ENCODE measurements at regions of chr13 and their contacts with region 1.

Region 1: DNA sequence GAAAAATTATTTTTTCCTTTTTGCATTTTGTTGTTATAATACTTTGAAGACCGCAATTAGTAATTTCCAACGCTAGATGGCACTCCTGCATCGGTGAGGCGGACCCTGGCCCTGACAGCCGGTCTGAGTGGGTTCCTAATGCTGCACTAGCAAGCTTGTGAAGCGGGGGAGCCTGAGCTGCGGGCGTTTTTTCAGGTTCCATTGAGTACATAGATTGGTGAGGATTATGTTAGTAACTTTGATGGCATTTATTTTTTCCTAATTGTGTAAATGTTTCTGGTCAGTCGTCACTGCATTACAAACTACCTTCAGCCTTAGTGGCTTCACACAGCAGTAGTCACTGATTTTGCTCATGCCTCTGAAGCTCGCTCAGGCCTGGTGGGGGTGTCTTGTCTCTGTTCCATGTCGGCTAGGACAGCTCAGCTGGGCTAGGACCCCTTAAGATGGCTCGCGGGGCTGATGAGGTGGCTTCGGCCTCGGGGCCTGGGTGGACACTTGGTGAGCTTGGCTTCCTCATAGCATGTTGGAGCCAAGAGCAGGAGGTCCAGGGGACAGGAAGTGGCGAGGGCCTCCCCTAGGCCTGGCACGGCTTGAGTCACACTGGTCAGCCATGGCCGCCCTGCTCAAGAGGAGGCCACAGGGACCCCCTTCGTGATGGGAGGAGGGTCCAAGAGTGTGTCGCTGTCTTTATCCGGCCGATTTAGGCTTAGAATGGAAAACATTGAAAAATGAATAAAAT is 25.0 kb downstream of the ERCC5 start:
- DNase-seq: peak; percentile 67
- ATAC-seq: peak; percentile 76
- H3K4me3 Mint-ChIP-seq: no peak overlapping the region
- H3K27ac Mint-ChIP-seq: no peak overlapping the region
- H3K4me1 Mint-ChIP-seq: peaks cover 35% of the 10 kb centered on the region
- H3K27me3 Mint-ChIP-seq: no peaks in the 10 kb centered on the region
- CTCF ChIP-seq: peak; percentile 91

Region 2: DNA sequence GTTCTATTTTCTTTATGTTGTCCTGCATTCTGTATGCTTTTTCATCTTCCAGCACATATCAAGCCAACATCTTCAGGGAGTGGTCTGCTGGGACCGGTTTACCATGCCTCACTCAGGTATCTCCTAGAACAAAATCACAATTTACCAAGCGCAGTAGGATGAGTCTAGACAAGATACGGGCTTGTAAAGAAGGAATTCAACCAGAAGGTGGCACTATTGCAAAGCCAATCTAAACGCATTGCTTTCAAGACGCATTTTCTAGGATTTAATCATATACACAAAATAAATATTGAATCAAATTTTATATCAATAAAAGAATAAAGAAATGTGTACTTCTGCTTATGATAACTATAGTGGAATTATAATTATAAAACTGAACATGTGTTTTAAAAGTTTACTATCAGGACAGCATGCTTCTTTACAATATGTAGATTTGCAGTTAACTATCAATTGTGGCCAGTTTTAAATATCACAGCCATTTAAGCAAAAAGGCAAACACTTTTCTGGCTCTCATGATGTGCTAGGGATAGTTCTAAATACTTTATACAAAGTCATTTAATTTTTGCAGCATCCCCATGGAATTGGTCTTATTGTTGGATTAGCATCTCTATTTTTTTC is 290.2 kb before region 1 on chr13:
- CTCF ChIA-PET with region 1: interaction called, 11 read pairs
- POLR2A ChIA-PET with region 1: no interaction called
- intact Hi-C with region 1: no loop called
- DNase-seq: peak; percentile 42
- ATAC-seq: peak; percentile 82
- H3K4me3 Mint-ChIP-seq: no peak overlapping the region
- H3K27ac Mint-ChIP-seq: no peak overlapping the region
- H3K4me1 Mint-ChIP-seq: peaks cover 12% of the 10 kb centered on the region
- H3K27me3 Mint-ChIP-seq: peaks cover 2% of the 10 kb centered on the region
- CTCF ChIP-seq: peak; percentile 86

Region 3: DNA sequence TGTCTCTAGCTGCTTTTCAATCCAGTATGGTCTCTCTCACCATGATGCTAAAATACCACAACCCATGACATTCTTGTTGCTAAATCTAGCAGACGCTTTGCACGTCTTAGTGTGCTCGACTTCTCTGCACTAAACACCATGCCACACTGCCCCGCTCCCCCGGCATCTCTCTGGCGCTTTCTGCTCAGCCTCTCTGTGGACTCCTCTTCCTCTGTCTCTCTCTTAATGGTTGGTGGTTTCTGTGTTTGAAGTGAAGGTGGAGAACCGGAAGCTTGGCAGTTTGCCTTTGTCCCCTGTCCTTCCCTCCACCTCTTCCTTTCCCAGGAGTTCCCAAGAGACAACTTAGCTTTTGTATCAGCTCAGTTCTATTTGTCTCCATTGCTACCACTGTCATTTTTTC is 16.2 kb before region 1 on chr13:
- CTCF ChIA-PET with region 1: interaction called, 19 read pairs
- POLR2A ChIA-PET with region 1: no interaction called
- intact Hi-C with region 1: no loop called
- DNase-seq: no peak
- ATAC-seq: no peak
- H3K4me3 Mint-ChIP-seq: no peak overlapping the region
- H3K27ac Mint-ChIP-seq: peak overlapping the region; percentile 27
- H3K4me1 Mint-ChIP-seq: peaks cover 21% of the 10 kb centered on the region
- H3K27me3 Mint-ChIP-seq: no peaks in the 10 kb centered on the region
- CTCF ChIP-seq: no peak

Region 4: DNA sequence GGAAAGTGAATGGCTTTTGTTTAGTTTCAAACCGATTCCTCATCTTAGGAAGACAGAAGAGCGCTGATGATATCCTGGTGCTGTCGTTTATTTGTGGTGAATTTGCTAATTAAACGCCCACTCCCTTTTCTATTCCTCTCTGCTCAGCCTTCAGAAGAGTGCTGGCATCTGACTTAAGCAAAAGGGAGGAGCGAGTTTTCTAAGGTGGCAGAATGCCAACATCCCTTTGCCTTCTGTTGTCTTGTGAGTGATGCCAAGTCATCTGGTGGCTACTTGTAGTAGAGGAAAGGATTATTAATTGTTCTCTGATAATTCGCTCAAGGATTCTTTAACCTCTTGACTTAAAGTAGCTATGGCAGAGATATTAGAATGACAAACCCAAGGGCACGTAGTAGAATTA is 43.1 kb after region 1 on chr13:
- CTCF ChIA-PET with region 1: interaction called, 39 read pairs
- POLR2A ChIA-PET with region 1: no interaction called
- intact Hi-C with region 1: no loop called
- DNase-seq: no peak
- ATAC-seq: no peak
- H3K4me3 Mint-ChIP-seq: no peak overlapping the region
- H3K27ac Mint-ChIP-seq: no peak overlapping the region
- H3K4me1 Mint-ChIP-seq: no peaks in the 10 kb centered on the region
- H3K27me3 Mint-ChIP-seq: peaks cover 18% of the 10 kb centered on the region
- CTCF ChIP-seq: no peak

Measured in activated CD8-positive, alpha-beta T cell treated with anti-CD3 and anti-CD28 coated beads for 36 hours (primary cell).